H1 (cell line): ENCODE measurements at regions of chr11 and their contacts with region 1.

Region 1: DNA sequence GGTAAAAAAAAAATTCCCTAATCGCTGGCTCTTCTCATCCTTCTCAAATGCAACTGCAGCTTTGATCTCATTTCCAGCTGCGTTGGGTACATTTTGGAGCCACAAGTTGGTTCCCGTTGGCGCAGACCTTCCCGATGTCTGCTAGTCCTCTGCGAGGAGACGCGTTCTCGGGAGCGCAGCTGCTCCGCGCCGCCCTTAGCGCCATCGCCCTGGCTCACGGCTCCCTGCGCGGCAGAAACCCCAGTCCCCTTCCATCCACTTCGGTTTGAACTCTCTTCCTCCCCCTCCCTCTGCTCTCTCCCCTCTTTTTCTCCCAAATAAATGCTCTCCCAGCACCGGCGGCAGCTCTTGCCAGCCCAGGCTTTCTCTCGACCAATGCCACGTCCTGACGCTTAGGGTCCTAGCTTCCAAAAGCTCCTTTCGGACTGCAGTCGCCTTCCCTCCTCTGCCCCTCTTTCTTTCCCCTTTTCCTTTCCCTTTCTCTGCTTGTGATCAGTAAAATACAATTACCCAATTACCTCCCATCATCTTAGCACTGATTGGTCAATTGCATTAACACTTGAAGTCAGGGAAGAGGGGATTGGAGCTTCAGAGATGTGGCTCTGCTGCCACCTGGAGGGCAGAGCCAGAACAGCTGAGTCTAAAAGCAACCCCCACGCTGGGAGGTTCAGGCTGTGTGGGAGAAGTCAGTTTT is 1165.7 kb downstream of the LRRC4C start:
- DNase-seq: peak; percentile 56 to 84
- H3K4me3 ChIP-seq: peak overlapping the region; percentile 62 to 70 (median 66)
- H3K27ac ChIP-seq: no peak overlapping the region
- H3K4me1 ChIP-seq: peaks cover 0 to 7% (median 3%) of the 10 kb centered on the region in 4 experiments; a peak in 2 of 7 replicates
- H3K27me3 ChIP-seq: peaks cover 11 to 24% (median 21%) of the 10 kb centered on the region in 4 experiments
- CTCF ChIP-seq: peak; percentile 77 to 89 (median 80)
- EP300 ChIP-seq: no peak
- POLR2A ChIP-seq: no peak
- RAD21 ChIP-seq: peak; percentile 93 to 94

Region 2: DNA sequence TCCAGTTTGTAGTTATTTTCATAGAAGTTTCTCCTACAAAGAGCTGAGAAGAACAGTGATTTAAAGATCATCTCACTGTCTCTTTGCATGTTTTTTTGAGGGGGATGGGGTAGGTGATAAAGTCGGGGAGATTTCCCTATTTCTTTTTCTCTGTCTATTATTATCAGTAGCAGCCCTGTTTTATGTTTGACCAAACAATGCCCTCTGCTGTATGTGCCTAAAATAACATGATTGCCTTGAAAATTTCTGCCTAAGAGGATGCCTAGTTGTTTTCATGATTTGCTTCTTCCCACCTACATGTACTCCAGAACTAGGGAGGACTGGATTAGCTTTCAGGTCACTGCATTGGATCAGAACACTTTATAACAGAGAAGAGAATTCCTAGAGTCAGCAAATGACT is 164.5 kb before region 1 on chr11:
- CTCF ChIA-PET with region 1: interaction called, 17 read pairs
- POLR2A ChIA-PET with region 1: no interaction called
- DNase-seq: no peak
- H3K4me3 ChIP-seq: no peak overlapping the region
- H3K27ac ChIP-seq: no peak overlapping the region
- H3K4me1 ChIP-seq: no peaks in the 10 kb centered on the region
- H3K27me3 ChIP-seq: no peaks in the 10 kb centered on the region
- CTCF ChIP-seq: peak in 2 of 3 experiments; percentile 36 to 54; a peak in 2 of 4 replicates
- EP300 ChIP-seq: no peak
- POLR2A ChIP-seq: no peak
- RAD21 ChIP-seq: peak; percentile 70 to 76

Region 3: DNA sequence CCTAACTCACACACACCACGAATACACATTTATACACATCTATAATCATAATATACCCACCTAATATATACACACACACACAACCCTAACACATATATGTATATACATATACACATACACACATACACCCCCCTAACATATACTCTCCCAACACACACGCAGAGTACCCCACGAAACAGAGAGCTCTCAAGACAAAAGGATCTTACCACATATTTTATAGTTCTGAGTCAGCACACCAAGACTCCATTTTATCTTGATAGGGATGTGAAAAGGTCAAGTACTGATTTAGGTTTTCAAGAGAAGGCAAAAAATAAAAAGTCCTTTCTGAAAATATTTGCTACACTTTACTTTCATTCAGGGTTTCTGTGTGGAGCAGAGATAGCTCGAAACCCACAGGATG is 41.6 kb before region 1 on chr11:
- CTCF ChIA-PET with region 1: no interaction called
- POLR2A ChIA-PET with region 1: no interaction called
- DNase-seq: no peak
- H3K4me3 ChIP-seq: no peak overlapping the region
- H3K27ac ChIP-seq: no peak overlapping the region
- H3K4me1 ChIP-seq: peaks cover 0 to 3% (median 0%) of the 10 kb centered on the region in 4 experiments; a peak in 1 of 7 replicates
- H3K27me3 ChIP-seq: peaks cover 2 to 11% (median 4%) of the 10 kb centered on the region in 4 experiments; a peak in 5 of 7 replicates
- CTCF ChIP-seq: no peak
- EP300 ChIP-seq: no peak
- POLR2A ChIP-seq: no peak
- RAD21 ChIP-seq: no peak

Region 4: GRCh38 chr11:40306938-40307548 is 13.2 kb after region 1 on chr11:
- CTCF ChIA-PET with region 1: interaction called, 14 read pairs
- POLR2A ChIA-PET with region 1: no interaction called
- DNase-seq: no peak
- H3K4me3 ChIP-seq: no peak overlapping the region
- H3K27ac ChIP-seq: no peak overlapping the region
- H3K4me1 ChIP-seq: peaks cover 0 to 2% (median 0%) of the 10 kb centered on the region in 4 experiments; a peak in 1 of 7 replicates
- H3K27me3 ChIP-seq: no peaks in the 10 kb centered on the region
- CTCF ChIP-seq: peak; percentile 47 to 64 (median 59)
- EP300 ChIP-seq: no peak
- POLR2A ChIP-seq: no peak
- RAD21 ChIP-seq: peak; percentile 89 to 92

Region 5: GRCh38 chr11:40338739-40339138 is 44.9 kb after region 1 on chr11:
- CTCF ChIA-PET with region 1: no interaction called
- POLR2A ChIA-PET with region 1: no interaction called
- DNase-seq: no peak
- H3K4me3 ChIP-seq: no peak overlapping the region
- H3K27ac ChIP-seq: no peak overlapping the region
- H3K4me1 ChIP-seq: no peaks in the 10 kb centered on the region
- H3K27me3 ChIP-seq: no peaks in the 10 kb centered on the region
- CTCF ChIP-seq: no peak
- EP300 ChIP-seq: no peak
- POLR2A ChIP-seq: no peak
- RAD21 ChIP-seq: no peak